CD4-positive, alpha-beta T cell (primary cell): ENCODE measurements at regions of chr2 and their contacts with region 1.

Region 1: GRCh38 chr2:98649135-98649991 is 41.0 kb downstream of the UNC50 start:
- DNase-seq: peak; percentile 72 to 91 (median 79)
- ATAC-seq: peak; percentile 92
- H3K4me3 ChIP-seq: no peak overlapping the region
- H3K4me3 Mint-ChIP-seq: peak overlapping the region; percentile 36
- H3K27ac ChIP-seq: peak overlapping the region in 1 of 2 donors; percentile 55
- H3K27ac Mint-ChIP-seq: peak overlapping the region; percentile 92
- H3K4me1 ChIP-seq: peaks cover 17% of the 10 kb centered on the region
- H3K4me1 Mint-ChIP-seq: peaks cover 62% of the 10 kb centered on the region
- H3K27me3 ChIP-seq: no peaks in the 10 kb centered on the region
- H3K27me3 Mint-ChIP-seq: no peaks in the 10 kb centered on the region
- CTCF ChIP-seq: peak; percentile 98

Region 2: DNA sequence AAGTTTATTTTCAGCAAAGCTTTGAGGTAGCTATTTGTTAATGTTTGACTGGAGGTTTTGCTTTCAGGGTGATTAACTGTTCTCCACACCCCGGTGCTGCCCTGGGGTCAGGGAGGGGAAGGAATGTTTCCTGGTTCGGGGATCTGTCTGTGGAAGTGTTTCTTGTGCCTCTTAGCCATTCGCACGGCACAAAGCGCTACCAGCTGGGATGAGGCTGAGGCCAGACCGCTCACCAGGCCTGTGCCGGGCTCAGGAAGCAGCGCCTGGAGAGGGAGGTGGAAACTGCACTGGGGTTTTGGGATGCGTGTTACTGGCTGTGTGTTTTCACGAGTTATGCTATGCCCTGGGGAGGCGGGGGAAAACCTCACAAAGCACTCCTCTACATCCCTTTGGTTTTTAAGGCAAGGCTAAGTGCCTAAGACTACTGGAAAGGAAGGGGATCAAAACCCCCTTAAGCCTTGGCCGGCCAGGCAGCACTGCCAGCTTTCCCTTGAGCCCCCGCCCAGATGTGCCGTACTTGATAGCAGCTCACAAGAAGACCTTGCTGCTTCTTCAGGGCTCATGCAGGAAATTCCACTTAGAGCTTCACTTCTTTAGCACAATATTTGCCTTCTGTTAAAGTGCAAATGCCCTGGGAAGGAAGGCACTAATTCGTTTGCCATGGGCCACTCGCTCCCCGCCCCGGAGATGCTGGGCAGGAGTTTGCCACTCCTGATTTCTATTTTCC is 368.8 kb before region 1 on chr2:
- CTCF ChIA-PET with region 1: no interaction called
- POLR2A ChIA-PET with region 1: no interaction called
- intact Hi-C with region 1: no loop called
- DNase-seq: no peak
- ATAC-seq: no peak
- H3K4me3 ChIP-seq: no peak overlapping the region
- H3K4me3 Mint-ChIP-seq: no peak overlapping the region
- H3K27ac ChIP-seq: no peak overlapping the region
- H3K27ac Mint-ChIP-seq: no peak overlapping the region
- H3K4me1 ChIP-seq: no peaks in the 10 kb centered on the region
- H3K4me1 Mint-ChIP-seq: no peaks in the 10 kb centered on the region
- H3K27me3 ChIP-seq: peaks cover 11 to 27% of the 10 kb centered on the region in 2 experiments
- H3K27me3 Mint-ChIP-seq: peaks cover 55% of the 10 kb centered on the region
- CTCF ChIP-seq: no peak

Region 3: GRCh38 chr2:98295721-98296414 is 353.5 kb before region 1 on chr2:
- CTCF ChIA-PET with region 1: no interaction called
- POLR2A ChIA-PET with region 1: no interaction called
- intact Hi-C with region 1: no loop called
- DNase-seq: no peak
- ATAC-seq: no peak
- H3K4me3 ChIP-seq: no peak overlapping the region
- H3K4me3 Mint-ChIP-seq: no peak overlapping the region
- H3K27ac ChIP-seq: no peak overlapping the region
- H3K27ac Mint-ChIP-seq: no peak overlapping the region
- H3K4me1 ChIP-seq: no peaks in the 10 kb centered on the region
- H3K4me1 Mint-ChIP-seq: no peaks in the 10 kb centered on the region
- H3K27me3 ChIP-seq: peaks cover 7 to 15% of the 10 kb centered on the region in 2 experiments
- H3K27me3 Mint-ChIP-seq: peaks cover 30% of the 10 kb centered on the region
- CTCF ChIP-seq: no peak

Region 4: GRCh38 chr2:98634401-98635092 is 14.8 kb before region 1 on chr2:
- CTCF ChIA-PET with region 1: interaction called, 32 read pairs
- POLR2A ChIA-PET with region 1: interaction called, 5 read pairs
- intact Hi-C with region 1: loop called in 1 of 2 experiments (anchors 2 kb)
- DNase-seq: peak in 10 of 14 experiments; percentile 28 to 76 (median 48)
- ATAC-seq: peak; percentile 60
- H3K4me3 ChIP-seq: no peak overlapping the region
- H3K4me3 Mint-ChIP-seq: no peak overlapping the region
- H3K27ac ChIP-seq: peak overlapping the region; percentile 9 to 25
- H3K27ac Mint-ChIP-seq: peak overlapping the region; percentile 83
- H3K4me1 ChIP-seq: peaks cover 31% of the 10 kb centered on the region
- H3K4me1 Mint-ChIP-seq: peaks cover 40% of the 10 kb centered on the region
- H3K27me3 ChIP-seq: no peaks in the 10 kb centered on the region
- H3K27me3 Mint-ChIP-seq: no peaks in the 10 kb centered on the region
- CTCF ChIP-seq: no peak

Region 5: GRCh38 chr2:98702127-98702802 is 52.9 kb after region 1 on chr2:
- CTCF ChIA-PET with region 1: interaction called, 11 read pairs
- POLR2A ChIA-PET with region 1: interaction called, 3 read pairs
- intact Hi-C with region 1: no loop called
- DNase-seq: no peak
- ATAC-seq: peak; percentile 46
- H3K4me3 ChIP-seq: no peak overlapping the region
- H3K4me3 Mint-ChIP-seq: peak overlapping the region; percentile 56
- H3K27ac ChIP-seq: peak overlapping the region; percentile 20 to 42
- H3K27ac Mint-ChIP-seq: peak overlapping the region; percentile 81
- H3K4me1 ChIP-seq: peaks cover 67% of the 10 kb centered on the region
- H3K4me1 Mint-ChIP-seq: peaks cover 84% of the 10 kb centered on the region
- H3K27me3 ChIP-seq: no peaks in the 10 kb centered on the region
- H3K27me3 Mint-ChIP-seq: no peaks in the 10 kb centered on the region
- CTCF ChIP-seq: no peak

Region 6: DNA sequence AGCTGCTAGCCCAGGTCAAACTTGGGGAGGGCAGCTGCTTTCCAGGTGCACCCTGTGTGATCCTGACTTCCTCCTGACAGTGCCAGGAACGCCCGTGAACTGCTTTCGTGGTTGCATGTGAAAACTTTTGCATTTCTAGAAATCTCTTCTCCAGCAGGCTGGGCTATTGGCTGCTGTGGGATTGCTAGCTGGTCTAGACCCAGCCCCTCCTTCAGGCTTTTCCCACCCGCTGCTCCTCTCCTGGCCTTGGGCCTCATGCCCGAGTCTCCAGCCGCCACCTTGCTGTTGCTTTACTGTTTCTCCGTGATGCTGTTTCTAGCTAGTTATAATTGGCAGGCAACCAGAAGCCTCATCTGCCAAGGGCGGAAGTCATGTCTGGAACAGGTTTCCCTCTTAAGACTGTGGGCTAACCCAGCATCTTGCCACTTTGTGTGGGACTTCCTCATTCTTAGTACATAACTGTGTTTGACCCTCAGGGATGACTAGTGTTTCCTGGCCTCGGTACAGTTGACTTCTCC is 108.6 kb after region 1 on chr2:
- CTCF ChIA-PET with region 1: interaction called, 11 read pairs
- POLR2A ChIA-PET with region 1: interaction called, 7 read pairs
- intact Hi-C with region 1: no loop called
- DNase-seq: peak in 13 of 14 experiments; percentile 41 to 89 (median 58)
- ATAC-seq: peak; percentile 78
- H3K4me3 ChIP-seq: peak overlapping the region; percentile 33
- H3K4me3 Mint-ChIP-seq: peak overlapping the region; percentile 75
- H3K27ac ChIP-seq: peak overlapping the region; percentile 73 to 75
- H3K27ac Mint-ChIP-seq: peak overlapping the region; percentile 94
- H3K4me1 ChIP-seq: peaks cover 68% of the 10 kb centered on the region
- H3K4me1 Mint-ChIP-seq: peaks cover 95% of the 10 kb centered on the region
- H3K27me3 ChIP-seq: no peaks in the 10 kb centered on the region
- H3K27me3 Mint-ChIP-seq: no peaks in the 10 kb centered on the region
- CTCF ChIP-seq: no peak

Region 7: GRCh38 chr2:98828793-98829371 is 179.5 kb after region 1 on chr2:
- CTCF ChIA-PET with region 1: interaction called, 18 read pairs
- POLR2A ChIA-PET with region 1: interaction called, 5 read pairs
- intact Hi-C with region 1: no loop called
- DNase-seq: peak in 4 of 14 experiments; percentile 47 to 71 (median 60)
- ATAC-seq: peak; percentile 56
- H3K4me3 ChIP-seq: no peak overlapping the region
- H3K4me3 Mint-ChIP-seq: peak overlapping the region; percentile 74
- H3K27ac ChIP-seq: peak overlapping the region in 1 of 2 donors; percentile 18
- H3K27ac Mint-ChIP-seq: peak overlapping the region; percentile 83
- H3K4me1 ChIP-seq: peaks cover 56% of the 10 kb centered on the region
- H3K4me1 Mint-ChIP-seq: peaks cover 84% of the 10 kb centered on the region
- H3K27me3 ChIP-seq: no peaks in the 10 kb centered on the region
- H3K27me3 Mint-ChIP-seq: no peaks in the 10 kb centered on the region
- CTCF ChIP-seq: no peak

Region 8: GRCh38 chr2:99180755-99181623 is 531.6 kb after region 1 on chr2 and contains the starts of genes MITD1 and MRPL30:
- CTCF ChIA-PET with region 1: interaction called, 6 read pairs
- POLR2A ChIA-PET with region 1: no interaction called
- intact Hi-C with region 1: loop called in 1 of 2 experiments (anchors 2 kb)
- DNase-seq: peak; percentile 83 to 96 (median 87)
- ATAC-seq: peak; percentile 93
- H3K4me3 ChIP-seq: peak within 1 kb of the TSS; percentile 74
- H3K4me3 Mint-ChIP-seq: peak within 1 kb of the TSS; percentile 97
- H3K27ac ChIP-seq: peak within 1 kb of the TSS; percentile 74 to 78
- H3K27ac Mint-ChIP-seq: peak within 1 kb of the TSS; percentile 92
- H3K4me1 ChIP-seq: peaks cover 31% of the 10 kb centered on the region
- H3K4me1 Mint-ChIP-seq: peaks cover 77% of the 10 kb centered on the region
- H3K27me3 ChIP-seq: no peaks in the 10 kb centered on the region
- H3K27me3 Mint-ChIP-seq: no peaks in the 10 kb centered on the region
- CTCF ChIP-seq: no peak
- total RNA-seq, gene MITD1: 14.1 to 14.6 TPM
- total RNA-seq, gene MRPL30: 8.6 to 9.5 TPM